Mucosa of descending colon (tissue), 3 donors: ENCODE measurements at regions of chr13 and their contacts with region 1.

Region 1: DNA sequence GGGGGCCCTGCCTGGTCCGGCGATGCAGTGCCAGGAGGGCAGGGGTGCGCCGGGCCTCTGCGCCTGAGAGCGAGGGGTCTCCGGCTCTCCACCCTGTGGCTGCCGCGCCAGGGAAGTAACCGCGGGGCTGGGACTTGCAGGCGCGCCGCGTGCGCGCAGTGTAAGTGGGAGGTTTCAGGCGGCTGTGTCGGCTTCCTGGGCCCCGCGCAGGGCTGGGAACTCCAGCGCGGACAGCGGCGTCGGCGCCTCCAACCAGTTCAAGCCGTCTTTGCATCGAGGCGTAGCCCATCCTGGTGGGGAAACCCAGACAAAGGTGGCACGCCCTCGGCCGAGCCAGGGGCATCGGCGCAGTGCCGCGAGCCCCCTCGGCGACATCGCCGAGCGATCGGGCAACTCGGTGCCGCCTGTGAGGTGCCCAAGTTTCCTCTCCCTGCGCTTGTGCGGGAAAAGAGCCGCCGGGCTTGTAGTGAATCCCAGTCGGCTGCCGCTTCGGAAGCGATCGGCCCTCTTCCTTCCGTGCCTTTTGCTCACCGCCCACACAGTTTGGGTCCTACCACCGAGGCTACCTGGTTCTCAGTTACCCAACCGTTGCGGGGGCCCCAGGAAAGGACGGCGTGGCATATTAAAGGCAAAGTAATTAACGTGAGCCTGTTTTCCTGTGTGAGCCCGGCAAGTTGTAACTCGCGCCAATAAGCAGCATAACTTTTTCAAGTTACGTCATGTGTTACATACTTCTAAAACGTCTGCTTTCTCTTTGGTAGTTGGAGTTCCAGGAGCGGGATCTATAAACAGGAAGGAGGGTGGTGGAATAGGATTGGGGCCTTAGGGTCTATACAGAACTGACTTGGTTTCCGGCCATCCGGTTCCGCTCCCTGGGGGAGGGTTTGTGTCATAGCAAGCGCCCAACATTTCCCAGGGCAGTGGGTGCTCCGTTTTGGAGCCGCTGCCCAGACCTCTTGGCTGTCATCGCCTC is 1.2 kb downstream of the LRCH1 start:
- DNase-seq: peak; percentile 73 to 85 (median 84)
- ATAC-seq: peak; percentile 73
- H3K4me3 ChIP-seq: peak overlapping the region; percentile 90
- H3K4me1 ChIP-seq: peaks cover 24% of the 10 kb centered on the region
- CTCF ChIP-seq: no peak

Region 2: GRCh38 chr13:46679369-46680120 is 125.4 kb after region 1 on chr13:
- intact Hi-C with region 1: loop called in 1 of 2 experiments (anchors 10 kb)
- DNase-seq: no peak
- ATAC-seq: peak; percentile 77
- H3K4me3 ChIP-seq: no peak overlapping the region
- H3K4me1 ChIP-seq: no peaks in the 10 kb centered on the region
- CTCF ChIP-seq: no peak